CD8-positive, alpha-beta memory T cell (primary cell): ENCODE measurements at regions of chr10 and their contacts with region 1.

Region 1: DNA sequence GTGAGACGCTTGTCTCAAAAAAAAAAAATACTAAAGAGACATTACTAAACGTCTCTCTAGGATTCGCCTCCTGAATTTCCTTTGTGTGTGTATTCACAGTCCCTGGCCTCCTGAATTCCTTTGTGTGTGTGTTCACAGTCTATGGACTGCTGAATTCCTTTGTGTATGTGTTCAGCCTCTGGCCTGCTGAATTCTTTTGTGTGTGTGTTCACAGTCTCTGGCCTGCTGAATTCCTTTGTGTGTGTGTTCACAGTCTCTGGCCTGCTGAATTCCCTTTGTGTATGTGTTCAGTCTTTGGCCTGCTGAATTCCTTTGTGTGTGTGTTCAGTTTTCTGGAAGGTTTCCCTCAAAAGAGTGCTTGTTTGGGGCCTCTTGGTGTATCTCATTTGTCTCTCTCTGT is 8.2 kb downstream of the BMS1 start:
- DNase-seq: no peak
- H3K4me3 ChIP-seq: no peak overlapping the region
- H3K4me3 Mint-ChIP-seq: no peak overlapping the region
- H3K27ac ChIP-seq: no peak overlapping the region
- H3K27ac Mint-ChIP-seq: peak overlapping the region in 1 of 8 donors; percentile 58
- H3K4me1 ChIP-seq: no peaks in the 10 kb centered on the region
- H3K4me1 Mint-ChIP-seq: peaks cover 8 to 21% (median 12%) of the 10 kb centered on the region in 3 donors
- H3K27me3 ChIP-seq: no peaks in the 10 kb centered on the region
- H3K27me3 Mint-ChIP-seq: no peaks in the 10 kb centered on the region

Region 2: GRCh38 chr10:42638055-42638820 is 152.6 kb before region 1 on chr10 and contains the start of gene ZNF33B:
- CTCF ChIA-PET with region 1: no interaction called
- POLR2A ChIA-PET with region 1: interaction called, 13 read pairs
- DNase-seq: peak; percentile 77 to 96 (median 93)
- H3K4me3 ChIP-seq: peak within 1 kb of the TSS; percentile 100
- H3K4me3 Mint-ChIP-seq: peak within 1 kb of the TSS; percentile 97 to 100 (median 97)
- H3K27ac ChIP-seq: peak within 1 kb of the TSS; percentile 96
- H3K27ac Mint-ChIP-seq: peak within 1 kb of the TSS; percentile 95 to 99 (median 98)
- H3K4me1 ChIP-seq: peaks cover 23% of the 10 kb centered on the region
- H3K4me1 Mint-ChIP-seq: peaks cover 35 to 54% (median 49%) of the 10 kb centered on the region in 3 donors
- H3K27me3 ChIP-seq: no peaks in the 10 kb centered on the region
- H3K27me3 Mint-ChIP-seq: peaks cover 0 to 3% of the 10 kb centered on the region in 2 donors
- total RNA-seq, gene ZNF33B: 11.9 to 14.2 TPM

Region 3: DNA sequence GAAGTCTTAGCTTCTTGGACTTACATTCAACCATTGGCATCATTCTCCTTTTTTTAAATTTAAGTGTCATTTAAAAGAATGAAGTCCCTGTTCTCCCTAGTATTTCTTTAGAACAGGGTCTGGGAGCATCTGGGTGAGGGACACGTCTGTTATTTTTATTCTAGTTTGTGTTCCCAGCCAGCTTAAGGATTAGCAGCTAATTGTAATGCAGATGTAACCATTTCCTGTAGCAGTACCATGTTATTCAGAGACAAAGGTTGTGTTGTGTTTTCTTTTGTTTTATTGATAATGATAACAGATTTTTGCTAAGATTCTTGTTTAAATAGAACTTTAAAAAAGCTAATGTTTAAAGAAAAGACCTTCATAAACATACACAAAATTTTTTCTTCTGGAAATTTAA is 26.1 kb after region 1 on chr10:
- CTCF ChIA-PET with region 1: no interaction called
- POLR2A ChIA-PET with region 1: no interaction called
- DNase-seq: no peak
- H3K4me3 ChIP-seq: no peak overlapping the region
- H3K4me3 Mint-ChIP-seq: no peak overlapping the region
- H3K27ac ChIP-seq: no peak overlapping the region
- H3K27ac Mint-ChIP-seq: no peak overlapping the region
- H3K4me1 ChIP-seq: no peaks in the 10 kb centered on the region
- H3K4me1 Mint-ChIP-seq: peaks cover 13 to 25% (median 20%) of the 10 kb centered on the region in 3 donors
- H3K27me3 ChIP-seq: no peaks in the 10 kb centered on the region
- H3K27me3 Mint-ChIP-seq: no peaks in the 10 kb centered on the region

Region 4: DNA sequence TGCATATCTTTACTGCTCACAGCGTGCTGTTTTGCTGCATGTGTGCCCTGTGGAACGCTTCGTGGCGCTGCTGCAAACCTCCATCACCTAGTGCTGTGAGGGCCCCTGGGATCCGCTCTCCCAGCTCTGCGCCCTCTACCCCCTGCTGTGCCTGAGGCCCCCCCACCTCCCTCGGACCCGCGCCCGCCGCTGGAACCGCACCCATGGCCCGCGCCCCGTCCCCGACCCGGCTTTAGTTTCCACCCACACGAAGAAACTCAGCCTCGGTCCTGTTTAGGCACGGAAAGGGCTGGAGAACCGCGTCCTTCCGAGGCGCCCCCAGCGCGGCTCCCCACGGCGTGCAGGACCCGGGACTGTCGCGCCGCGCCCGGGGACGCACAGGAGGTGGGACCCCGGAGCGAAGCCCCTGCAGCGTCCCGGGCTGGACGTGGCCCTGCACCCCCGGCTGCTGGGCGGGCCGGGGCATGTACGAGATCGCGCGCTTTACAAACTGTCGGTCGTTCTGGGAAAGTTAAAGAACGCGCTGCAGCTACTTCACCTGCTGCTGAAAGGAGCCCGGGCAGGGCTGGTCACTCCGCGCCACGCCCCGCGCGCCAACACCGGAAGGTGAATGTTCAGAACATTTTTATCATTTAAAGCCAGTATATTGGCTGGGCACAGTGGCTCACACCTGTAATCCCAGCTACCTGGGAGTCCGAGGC is 46.1 kb after region 1 on chr10:
- CTCF ChIA-PET with region 1: no interaction called
- POLR2A ChIA-PET with region 1: no interaction called
- DNase-seq: no peak
- H3K4me3 ChIP-seq: no peak overlapping the region
- H3K4me3 Mint-ChIP-seq: no peak overlapping the region
- H3K27ac ChIP-seq: no peak overlapping the region
- H3K27ac Mint-ChIP-seq: peak overlapping the region in 1 of 8 donors; percentile 50
- H3K4me1 ChIP-seq: no peaks in the 10 kb centered on the region
- H3K4me1 Mint-ChIP-seq: peaks cover 0 to 2% (median 0%) of the 10 kb centered on the region in 3 donors
- H3K27me3 ChIP-seq: no peaks in the 10 kb centered on the region
- H3K27me3 Mint-ChIP-seq: peaks cover 11 to 28% of the 10 kb centered on the region in 2 donors